Kidney (tissue), 22 donors: ENCODE measurements at regions of chr1 and their contacts with region 1.

Region 1: DNA sequence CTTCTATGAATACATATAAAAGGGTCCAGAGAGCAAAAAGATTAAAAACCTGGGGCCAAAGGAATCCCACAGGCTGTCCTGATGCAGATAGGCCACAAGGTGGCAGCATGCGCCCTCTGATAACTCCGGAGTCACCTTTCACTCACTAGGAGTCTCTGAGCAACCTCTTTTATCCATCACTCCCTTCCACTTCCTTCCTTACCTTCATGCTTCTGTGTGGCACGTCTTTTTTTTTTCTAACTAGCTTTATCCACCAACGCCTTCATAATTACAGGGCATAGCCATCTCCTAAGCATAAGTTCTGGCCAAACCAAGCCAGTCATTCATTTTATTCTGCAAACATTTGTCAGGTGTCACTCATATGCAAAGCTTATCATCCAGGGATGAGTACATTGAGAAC is 3.9 kb upstream of the PGLYRP4 start:
- DNase-seq: peak in 4 of 5 donors; percentile 68 to 78 (median 73)
- H3K4me3 ChIP-seq: no peak overlapping the region
- H3K27ac ChIP-seq: no peak overlapping the region
- H3K4me1 ChIP-seq: no peaks in the 10 kb centered on the region
- H3K27me3 ChIP-seq: no peaks in the 10 kb centered on the region
- CTCF ChIP-seq: peak; percentile 92

Region 2: GRCh38 chr1:153122831-153123421 is 229.6 kb before region 1 on chr1:
- intact Hi-C with region 1: no loop called
- DNase-seq: peak in 4 of 5 donors; percentile 82 to 93 (median 88)
- H3K4me3 ChIP-seq: no peak overlapping the region
- H3K27ac ChIP-seq: no peak overlapping the region
- H3K4me1 ChIP-seq: peaks cover 0 to 2% (median 0%) of the 10 kb centered on the region in 3 donors
- H3K27me3 ChIP-seq: no peaks in the 10 kb centered on the region
- CTCF ChIP-seq: no peak

Region 3: GRCh38 chr1:153288634-153289275 is 63.8 kb before region 1 on chr1:
- intact Hi-C with region 1: no loop called
- DNase-seq: no peak
- H3K4me3 ChIP-seq: no peak overlapping the region
- H3K27ac ChIP-seq: no peak overlapping the region
- H3K4me1 ChIP-seq: no peaks in the 10 kb centered on the region
- H3K27me3 ChIP-seq: no peaks in the 10 kb centered on the region
- CTCF ChIP-seq: no peak

Region 4: DNA sequence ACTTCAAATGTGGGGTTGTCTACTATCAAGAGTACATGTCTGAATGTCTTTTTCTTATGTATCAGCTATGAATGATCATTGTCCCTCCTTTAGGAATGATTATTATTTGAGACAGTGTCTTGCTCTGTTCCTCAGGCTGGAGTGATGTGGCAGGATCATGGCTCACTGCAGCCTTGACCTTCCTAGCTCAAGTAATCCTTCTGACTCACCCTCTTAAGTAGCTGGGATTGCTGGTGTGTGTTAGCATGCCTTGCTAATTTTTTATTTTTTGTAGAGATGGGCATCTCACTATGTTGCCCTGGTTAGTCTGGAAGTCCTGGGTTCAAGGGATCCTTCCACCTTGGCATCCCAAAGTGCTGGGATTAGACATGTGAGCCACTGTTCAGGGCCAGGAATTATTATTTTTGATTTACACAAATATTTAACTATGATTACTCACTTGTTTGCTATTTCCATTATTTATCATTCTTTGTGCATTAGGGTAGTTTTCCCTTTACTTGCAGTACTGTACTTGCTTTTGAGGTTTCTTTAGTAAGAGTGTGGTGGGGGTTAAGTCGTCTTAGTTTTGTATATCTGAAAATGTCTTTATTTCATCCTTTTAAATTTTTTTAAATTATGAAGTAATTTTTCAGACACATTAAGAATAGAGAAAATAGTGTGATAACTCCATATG is 95.1 kb after region 1 on chr1:
- intact Hi-C with region 1: no loop called
- DNase-seq: no peak
- H3K4me3 ChIP-seq: no peak overlapping the region
- H3K27ac ChIP-seq: no peak overlapping the region
- H3K4me1 ChIP-seq: no peaks in the 10 kb centered on the region
- H3K27me3 ChIP-seq: no peaks in the 10 kb centered on the region
- CTCF ChIP-seq: no peak

Region 5: GRCh38 chr1:153494976-153495535 is 142.5 kb after region 1 on chr1:
- intact Hi-C with region 1: loop called (anchors 10 kb)
- DNase-seq: peak; percentile 81 to 91 (median 88)
- H3K4me3 ChIP-seq: no peak overlapping the region
- H3K27ac ChIP-seq: no peak overlapping the region
- H3K4me1 ChIP-seq: no peaks in the 10 kb centered on the region
- H3K27me3 ChIP-seq: no peaks in the 10 kb centered on the region
- CTCF ChIP-seq: peak; percentile 76